Activated B cell treated with CpG ODN at 0.5 μM for 24 hours (primary cell): ENCODE measurements at regions of chr19 and their contacts with region 1.

Region 1: DNA sequence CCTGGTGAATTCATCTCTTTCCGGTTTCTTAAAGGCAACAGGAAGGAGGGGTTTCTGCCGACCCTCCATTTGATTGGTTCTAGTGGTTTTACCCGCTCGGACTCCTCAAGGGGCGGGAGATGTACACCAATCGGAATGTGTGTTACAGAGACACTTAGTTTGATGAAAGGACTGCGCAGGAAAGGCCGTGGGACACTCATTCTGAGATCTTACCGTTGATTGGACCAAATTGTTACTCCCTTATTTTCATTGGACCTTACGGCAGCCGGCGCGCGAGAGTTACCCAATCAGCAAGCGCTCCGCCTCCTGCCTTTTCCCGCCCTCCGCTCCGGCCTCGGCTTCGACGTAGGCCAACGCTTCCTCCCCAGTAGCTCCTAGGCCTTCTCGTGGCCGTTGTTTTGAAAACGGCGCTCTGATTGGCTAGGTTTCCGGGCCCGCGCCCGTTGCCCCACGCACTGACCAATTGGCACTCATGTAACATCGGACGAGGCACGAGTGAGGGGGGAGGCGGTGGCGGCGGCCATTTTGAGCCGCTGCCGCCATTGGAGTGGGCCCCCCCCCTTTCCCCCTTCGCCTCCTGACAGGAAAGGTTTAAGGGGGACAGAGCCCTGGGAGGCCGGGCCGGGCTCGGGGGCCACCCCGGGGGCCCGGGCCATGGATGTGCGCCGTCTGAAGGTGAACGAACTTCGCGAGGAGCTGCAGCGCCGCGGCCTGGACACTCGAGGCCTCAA is at the start of gene HNRNPUL1:
- DNase-seq: peak; percentile 98
- ATAC-seq: peak; percentile 77
- H3K4me3 Mint-ChIP-seq: peak within 1 kb of the TSS; percentile 96
- H3K27ac Mint-ChIP-seq: peak within 1 kb of the TSS; percentile 99
- H3K4me1 Mint-ChIP-seq: peaks cover 48% of the 10 kb centered on the region
- H3K27me3 Mint-ChIP-seq: no peaks in the 10 kb centered on the region
- CTCF ChIP-seq: no peak
- total RNA-seq, gene HNRNPUL1: 235 and 244 TPM in 2 replicates

Region 2: DNA sequence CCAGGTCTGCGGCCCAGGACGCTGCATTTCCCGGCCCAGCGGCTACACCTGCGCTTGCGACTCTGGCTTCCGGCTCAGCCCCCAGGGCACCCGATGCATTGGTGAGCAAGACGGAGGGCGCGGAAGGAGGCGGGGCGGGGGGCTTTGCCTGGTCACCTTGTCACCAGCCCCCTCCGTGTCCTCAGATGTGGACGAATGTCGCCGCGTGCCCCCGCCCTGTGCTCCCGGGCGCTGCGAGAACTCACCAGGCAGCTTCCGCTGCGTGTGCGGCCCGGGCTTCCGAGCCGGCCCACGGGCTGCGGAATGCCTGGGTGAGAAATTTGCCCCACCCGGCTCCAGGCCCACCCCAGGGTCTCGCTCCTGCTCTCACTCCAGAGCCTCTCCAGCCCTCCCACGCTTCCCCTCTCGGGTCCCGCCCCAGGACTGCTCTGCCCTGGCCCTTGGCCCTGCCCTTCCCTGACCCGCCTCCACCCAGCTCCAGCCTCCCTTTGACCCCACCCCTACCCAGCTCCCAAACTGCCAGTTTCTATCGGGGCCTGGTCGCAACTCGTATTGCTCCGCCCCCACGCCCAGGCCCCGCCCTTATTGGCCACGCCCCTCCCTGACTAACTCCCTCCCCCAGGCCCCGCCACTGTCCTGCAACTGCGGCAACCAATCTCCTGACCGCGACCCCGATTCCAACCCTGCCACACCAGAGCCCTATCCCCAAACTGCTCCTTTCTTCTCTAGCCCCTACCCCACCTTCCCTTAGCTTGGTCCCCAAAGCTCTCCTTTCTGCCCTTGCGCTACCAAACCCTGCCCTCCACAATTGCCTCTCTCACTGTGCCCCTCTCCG is 654.2 kb before region 1 on chr19:
- CTCF ChIA-PET with region 1: no interaction called
- POLR2A ChIA-PET with region 1: interaction called, 7 read pairs
- intact Hi-C with region 1: loop called (anchors 2 kb)
- DNase-seq: peak; percentile 92
- ATAC-seq: peak; percentile 54
- H3K4me3 Mint-ChIP-seq: peak overlapping the region; percentile 88
- H3K27ac Mint-ChIP-seq: peak overlapping the region; percentile 94
- H3K4me1 Mint-ChIP-seq: peaks cover 60% of the 10 kb centered on the region
- H3K27me3 Mint-ChIP-seq: no peaks in the 10 kb centered on the region
- CTCF ChIP-seq: no peak

Region 3: DNA sequence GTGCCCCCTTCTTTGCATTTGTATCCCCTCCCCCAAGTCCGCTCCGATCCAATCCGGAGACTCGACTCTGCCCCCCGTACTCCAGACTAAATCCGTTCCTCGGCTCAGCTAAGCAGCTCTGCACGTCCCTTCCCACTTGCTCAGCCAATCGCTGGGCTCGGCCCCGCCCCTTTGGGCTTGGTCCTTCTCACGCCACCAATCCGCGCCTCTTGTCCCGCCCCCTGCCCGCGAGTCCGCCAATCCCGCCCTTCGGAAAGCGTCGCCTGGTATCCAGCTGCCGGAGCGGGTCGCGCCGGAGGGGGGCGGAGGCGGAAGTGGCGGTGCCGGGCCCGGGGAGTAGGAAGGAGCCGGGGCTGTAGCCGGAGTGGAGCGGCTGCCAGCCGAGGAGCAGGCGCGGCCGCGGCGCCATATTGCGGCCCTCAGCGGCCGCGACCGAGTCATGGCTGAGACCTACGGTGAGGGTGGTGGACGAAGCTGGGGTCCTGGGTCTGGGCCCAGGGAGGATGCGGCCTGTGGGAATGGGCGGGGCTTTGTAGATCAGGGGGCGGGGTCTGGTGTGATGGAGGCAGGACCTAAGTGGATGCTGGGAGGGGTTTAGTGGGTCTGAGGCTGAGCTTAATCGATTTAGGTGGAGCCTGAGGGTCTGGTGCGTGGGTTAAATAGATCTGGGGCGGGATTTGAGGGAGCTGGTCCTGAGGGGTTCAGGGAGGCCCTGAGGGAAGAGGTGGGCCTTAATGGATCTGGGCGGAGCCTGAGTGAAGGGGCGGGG is 485.9 kb before region 1 on chr19 and contains the start of gene RAB4B:
- CTCF ChIA-PET with region 1: no interaction called
- POLR2A ChIA-PET with region 1: interaction called, 37 read pairs
- intact Hi-C with region 1: loop called (anchors 1 kb)
- DNase-seq: peak; percentile 100
- ATAC-seq: peak; percentile 74
- H3K4me3 Mint-ChIP-seq: peak within 1 kb of the TSS; percentile 98
- H3K27ac Mint-ChIP-seq: peak within 1 kb of the TSS; percentile 99
- H3K4me1 Mint-ChIP-seq: peaks cover 73% of the 10 kb centered on the region
- H3K27me3 Mint-ChIP-seq: no peaks in the 10 kb centered on the region
- CTCF ChIP-seq: no peak
- total RNA-seq, gene RAB4B: 90.6 and 98.1 TPM in 2 replicates

Region 4: DNA sequence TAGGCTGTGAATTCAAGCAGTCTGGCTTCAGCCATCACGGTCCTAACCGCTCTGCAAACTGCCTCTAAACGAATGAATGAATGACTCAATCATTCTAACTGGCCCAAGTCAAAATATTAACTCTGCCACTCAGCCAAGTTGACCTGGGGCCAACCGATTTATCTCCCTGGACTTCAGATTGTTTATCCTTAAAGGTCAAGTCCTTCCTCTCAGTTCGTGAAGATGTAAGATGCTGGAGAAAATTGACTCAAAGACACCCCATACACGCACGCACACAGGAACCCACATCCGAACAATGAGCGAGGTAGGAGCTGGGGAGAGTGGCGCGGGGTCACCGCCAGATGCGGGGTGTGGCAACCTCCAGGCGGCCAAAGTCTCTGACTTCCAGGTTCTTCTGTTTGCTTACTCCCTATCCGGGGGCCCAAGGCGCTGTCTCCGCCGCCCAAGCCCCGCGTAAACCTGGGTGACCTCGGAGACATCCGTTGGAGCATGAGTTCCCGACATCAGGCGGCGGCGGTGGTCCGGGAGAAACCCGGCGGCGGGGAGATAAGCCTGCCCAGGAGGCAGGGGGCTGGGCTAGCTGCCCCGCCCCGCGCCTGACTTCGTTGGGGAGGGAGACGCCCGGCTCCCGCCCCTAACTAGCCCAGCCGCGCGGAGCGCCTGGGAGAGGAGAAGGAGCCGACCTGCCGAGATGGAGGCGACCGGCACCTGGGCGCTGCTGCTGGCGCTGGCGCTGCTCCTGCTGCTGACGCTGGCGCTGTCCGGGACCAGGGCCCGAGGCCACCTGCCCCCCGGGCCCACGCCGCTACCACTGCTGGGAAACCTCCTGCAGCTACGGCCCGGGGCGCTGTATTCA is 71.2 kb before region 1 on chr19 and contains the start of gene CYP2S1:
- CTCF ChIA-PET with region 1: no interaction called
- POLR2A ChIA-PET with region 1: no interaction called
- intact Hi-C with region 1: no loop called
- DNase-seq: no peak
- ATAC-seq: no peak
- H3K4me3 Mint-ChIP-seq: no peak within 1 kb of the TSS
- H3K27ac Mint-ChIP-seq: no peak within 1 kb of the TSS
- H3K4me1 Mint-ChIP-seq: peaks cover 2% of the 10 kb centered on the region
- H3K27me3 Mint-ChIP-seq: peaks cover 49% of the 10 kb centered on the region
- CTCF ChIP-seq: no peak
- total RNA-seq, gene CYP2S1: not detected in 2 replicates

Region 5: GRCh38 chr19:41206926-41207750 is 56.9 kb before region 1 on chr19:
- CTCF ChIA-PET with region 1: interaction called, 29 read pairs
- POLR2A ChIA-PET with region 1: interaction called, 44 read pairs
- intact Hi-C with region 1: loop called (anchors 1 kb)
- DNase-seq: no peak
- ATAC-seq: no peak
- H3K4me3 Mint-ChIP-seq: no peak overlapping the region
- H3K27ac Mint-ChIP-seq: no peak overlapping the region
- H3K4me1 Mint-ChIP-seq: no peaks in the 10 kb centered on the region
- H3K27me3 Mint-ChIP-seq: peaks cover 3% of the 10 kb centered on the region
- CTCF ChIP-seq: no peak

Region 6: GRCh38 chr19:41353466-41354342 is 89.7 kb after region 1 on chr19 and contains the start of gene TGFB1:
- CTCF ChIA-PET with region 1: no interaction called
- POLR2A ChIA-PET with region 1: interaction called, 43 read pairs
- intact Hi-C with region 1: loop called (anchors 1 kb)
- DNase-seq: peak; percentile 92
- ATAC-seq: peak; percentile 70
- H3K4me3 Mint-ChIP-seq: peak within 1 kb of the TSS; percentile 100
- H3K27ac Mint-ChIP-seq: peak within 1 kb of the TSS; percentile 96
- H3K4me1 Mint-ChIP-seq: peaks cover 44% of the 10 kb centered on the region
- H3K27me3 Mint-ChIP-seq: no peaks in the 10 kb centered on the region
- CTCF ChIP-seq: peak; percentile 66
- total RNA-seq, gene TGFB1: 80.7 and 88.5 TPM in 2 replicates

Region 7: GRCh38 chr19:41570639-41571112 is 306.7 kb after region 1 on chr19:
- CTCF ChIA-PET with region 1: no interaction called
- POLR2A ChIA-PET with region 1: interaction called, 3 read pairs
- intact Hi-C with region 1: loop called (anchors 10 kb)
- DNase-seq: peak; percentile 77
- ATAC-seq: peak; percentile 97
- H3K4me3 Mint-ChIP-seq: no peak overlapping the region
- H3K27ac Mint-ChIP-seq: no peak overlapping the region
- H3K4me1 Mint-ChIP-seq: peaks cover 14% of the 10 kb centered on the region
- H3K27me3 Mint-ChIP-seq: peaks cover 2% of the 10 kb centered on the region
- CTCF ChIP-seq: peak; percentile 50